SK-N-SH (cell line): ENCODE measurements at regions of chr11 and their contacts with region 1.

Region 1: DNA sequence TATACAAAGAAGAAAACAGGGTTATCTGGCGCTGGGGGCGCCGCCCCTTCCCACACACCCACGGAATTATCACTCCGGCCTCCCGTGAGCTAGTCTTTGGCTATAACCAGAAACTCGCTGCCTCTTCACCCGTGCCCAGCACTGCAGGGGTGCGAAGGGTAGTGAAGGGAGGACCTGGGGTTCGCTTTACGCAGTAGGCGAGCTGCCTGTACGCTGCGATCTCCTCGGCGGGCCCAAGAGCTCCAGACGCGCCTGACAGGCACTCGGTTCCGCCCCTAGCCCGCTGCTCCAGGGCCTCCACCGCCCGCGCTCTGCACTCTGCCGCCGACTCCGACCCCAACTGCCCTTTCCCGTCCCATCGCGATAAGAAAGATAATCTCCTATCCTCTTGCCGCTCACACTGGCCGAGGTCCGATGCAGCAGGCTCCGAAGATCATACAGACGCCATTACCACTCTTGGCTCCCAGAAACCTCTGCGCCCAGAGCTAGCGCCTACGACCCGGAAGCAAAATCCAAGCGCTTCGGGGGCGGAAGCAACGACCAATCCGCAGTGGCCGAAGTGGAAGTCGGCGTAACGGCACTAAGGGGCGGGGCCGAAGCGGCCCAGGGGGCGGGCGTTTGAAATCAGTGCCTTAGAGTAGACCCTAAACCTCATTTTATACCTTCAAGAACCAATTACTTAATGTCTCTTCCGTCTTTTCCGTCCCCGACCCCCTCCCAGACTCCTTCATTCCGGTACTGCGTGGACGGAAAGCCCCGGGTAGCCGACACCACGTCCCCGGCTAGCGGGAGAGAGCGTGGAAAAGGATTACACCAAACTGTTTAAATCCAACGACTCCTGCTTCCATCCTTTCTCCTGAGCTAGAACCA is at the starts of genes CWC15 and KDM4D:
- DNase-seq: peak; percentile 93
- H3K4me3 ChIP-seq: peak within 1 kb of the TSS; percentile 78 to 97
- H3K27ac ChIP-seq: peak within 1 kb of the TSS; percentile 68 to 86
- H3K4me1 ChIP-seq: peaks cover 6 to 7% of the 10 kb centered on the region in 2 experiments; a peak in 2 of 4 replicates
- H3K27me3 ChIP-seq: no peaks in the 10 kb centered on the region
- CTCF ChIP-seq: no peak
- EP300 ChIP-seq: peak in 1 of 2 experiments; percentile 22; a peak in 1 of 4 replicates
- RAD21 ChIP-seq: no peak
- polyA plus RNA-seq, gene CWC15: 27.0 and 33.5 TPM in 2 replicates
- polyA plus RNA-seq, gene KDM4D: 1.1 and 1.2 TPM in 2 replicates

Region 2: DNA sequence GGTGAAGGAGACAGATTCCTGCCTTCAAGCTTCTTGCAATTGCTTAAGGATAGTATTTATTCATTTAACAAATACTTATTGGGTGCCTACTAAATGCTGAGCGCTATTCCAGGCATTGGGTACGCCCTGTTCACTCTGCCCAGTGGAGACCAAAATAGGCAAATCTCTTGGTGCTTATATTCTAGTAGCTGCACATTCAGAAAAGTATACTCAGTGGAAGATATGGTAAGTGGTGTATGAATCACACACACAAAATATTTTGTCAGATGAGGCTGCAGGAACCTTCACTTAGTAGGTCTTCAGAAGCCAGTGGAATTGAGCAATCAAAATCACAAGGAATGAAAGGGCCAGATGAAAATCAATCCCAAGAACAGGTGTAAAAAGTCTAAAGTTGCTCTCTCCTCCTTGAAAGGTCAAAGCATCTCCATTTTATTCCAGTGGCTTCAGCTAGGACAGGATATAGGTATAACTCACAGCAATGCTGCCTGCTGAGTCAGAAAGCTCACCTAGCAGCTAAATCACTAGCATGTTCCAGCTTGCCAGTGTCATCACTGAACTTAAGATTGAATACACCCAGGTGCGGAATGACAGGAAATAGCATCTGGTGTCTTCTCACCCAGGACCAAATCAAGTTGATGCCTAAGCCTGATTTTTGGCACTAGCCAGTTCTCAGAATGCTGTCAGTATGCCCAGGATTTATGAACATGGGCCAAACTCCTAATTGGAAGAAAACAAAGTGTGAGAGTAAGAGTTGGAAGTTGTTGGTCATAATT is 121.3 kb before region 1 on chr11:
- CTCF ChIA-PET with region 1: no interaction called
- POLR2A ChIA-PET with region 1: no interaction called
- DNase-seq: no peak
- H3K4me3 ChIP-seq: no peak overlapping the region
- H3K27ac ChIP-seq: no peak overlapping the region
- H3K4me1 ChIP-seq: peaks cover 5 to 7% of the 10 kb centered on the region in 2 experiments; a peak in 2 of 4 replicates
- H3K27me3 ChIP-seq: no peaks in the 10 kb centered on the region
- CTCF ChIP-seq: no peak
- EP300 ChIP-seq: no peak
- RAD21 ChIP-seq: no peak

Region 3: DNA sequence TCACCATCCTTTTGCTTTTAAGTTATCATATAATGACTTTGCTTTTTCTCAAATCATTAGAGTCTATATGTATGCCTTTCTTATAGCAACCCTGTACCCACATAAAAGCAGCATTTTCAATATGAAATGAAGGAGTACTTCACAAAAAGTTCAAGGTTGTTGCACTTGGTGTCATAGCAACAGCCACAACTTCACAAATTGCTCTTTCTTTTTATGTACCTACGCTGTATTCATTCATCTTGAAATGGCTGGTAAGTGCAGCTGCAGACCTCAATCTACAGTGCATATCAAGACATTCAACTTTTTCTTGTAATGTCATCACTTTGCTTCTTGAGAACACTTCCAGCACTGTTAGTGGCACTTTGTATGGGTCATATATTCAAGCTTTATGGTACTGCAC is 18.6 kb before region 1 on chr11:
- CTCF ChIA-PET with region 1: interaction called, 10 read pairs
- POLR2A ChIA-PET with region 1: no interaction called
- DNase-seq: no peak
- H3K4me3 ChIP-seq: no peak overlapping the region
- H3K27ac ChIP-seq: no peak overlapping the region
- H3K4me1 ChIP-seq: no peaks in the 10 kb centered on the region
- H3K27me3 ChIP-seq: no peaks in the 10 kb centered on the region
- CTCF ChIP-seq: no peak
- EP300 ChIP-seq: no peak
- RAD21 ChIP-seq: no peak

Region 4: GRCh38 chr11:95095858-95096587 is 122.7 kb after region 1 on chr11:
- CTCF ChIA-PET with region 1: no interaction called
- POLR2A ChIA-PET with region 1: no interaction called
- DNase-seq: no peak
- H3K4me3 ChIP-seq: no peak overlapping the region
- H3K27ac ChIP-seq: peak overlapping the region; percentile 53 to 69; a peak in 3 of 4 replicates
- H3K4me1 ChIP-seq: peaks cover 2 to 32% of the 10 kb centered on the region in 2 experiments; a peak in 2 of 4 replicates
- H3K27me3 ChIP-seq: no peaks in the 10 kb centered on the region
- CTCF ChIP-seq: no peak
- EP300 ChIP-seq: peak in 1 of 2 experiments; percentile 21; a peak in 1 of 4 replicates
- RAD21 ChIP-seq: no peak